HepG2 (cell line): ENCODE measurements at regions of chr21 and their contacts with region 1.

Region 1: DNA sequence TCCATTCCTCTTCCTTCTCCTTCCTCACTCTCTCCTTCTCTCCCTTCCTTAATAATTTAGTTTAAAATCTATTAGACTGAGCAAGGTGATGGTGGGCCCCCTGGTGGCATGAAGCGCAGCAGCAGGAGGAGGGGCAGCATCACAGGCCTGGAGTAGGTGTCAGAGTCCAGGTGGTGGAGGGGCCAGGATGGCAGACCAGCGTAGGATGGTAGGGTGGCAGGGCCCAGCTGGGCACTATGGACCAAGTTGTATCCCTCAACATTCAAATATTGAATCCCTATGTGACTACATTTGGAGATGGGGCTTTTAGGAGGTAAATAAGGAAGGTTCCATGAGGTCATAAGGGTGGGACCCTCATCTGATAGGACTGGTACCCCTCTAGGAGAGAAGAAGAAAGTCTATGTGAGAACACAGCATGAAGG is 61.0 kb downstream of the WDR4 start:
- DNase-seq: peak; percentile 52
- ATAC-seq: peak; percentile 88
- H3K4me3 ChIP-seq: no peak overlapping the region
- H3K27ac ChIP-seq: no peak overlapping the region
- H3K4me1 ChIP-seq: peaks cover 24% of the 10 kb centered on the region
- H3K27me3 ChIP-seq: no peaks in the 10 kb centered on the region
- CTCF ChIP-seq: peak; percentile 90
- EP300 ChIP-seq: no peak
- POLR2A ChIP-seq: no peak
- RAD21 ChIP-seq: peak; percentile 78

Region 2: DNA sequence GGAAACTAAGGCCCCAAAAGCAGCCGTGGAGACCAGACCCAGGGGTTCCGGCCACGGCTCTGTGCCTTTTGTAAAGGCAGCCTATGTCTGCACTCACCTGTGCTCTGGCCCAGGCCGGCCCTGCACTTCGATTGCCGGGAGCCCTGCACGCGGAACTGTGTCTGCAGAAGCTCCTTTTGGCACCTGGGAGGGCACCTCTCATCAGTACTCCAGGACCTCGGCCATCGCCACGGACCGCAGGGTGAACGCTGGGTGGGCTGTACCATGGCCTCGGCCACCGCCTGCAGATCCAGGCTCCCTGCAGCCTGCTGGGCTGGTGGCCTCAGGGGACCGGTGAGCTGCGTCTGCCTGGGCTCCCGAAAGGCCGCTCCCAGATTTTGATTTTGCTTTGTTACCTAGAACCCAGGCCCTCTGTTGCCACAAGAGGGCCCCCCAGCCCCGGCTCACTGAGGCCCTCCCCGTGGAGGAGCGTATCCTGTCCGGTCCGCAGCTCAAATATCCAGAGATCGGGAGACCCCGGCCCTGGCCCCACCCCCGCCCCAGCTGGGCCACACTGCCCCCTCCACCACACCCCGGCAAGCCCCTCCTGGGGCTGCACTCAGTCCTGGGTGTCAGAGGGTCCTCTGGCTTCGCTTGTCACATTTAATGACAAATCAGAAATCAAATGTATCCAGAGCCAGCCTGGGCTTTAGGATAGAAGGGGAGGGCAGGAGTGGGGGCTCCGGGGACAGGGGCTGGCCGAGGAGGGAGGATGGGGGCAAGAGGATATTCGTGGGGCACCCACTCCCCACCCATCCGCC is 225.1 kb before region 1 on chr21:
- CTCF ChIA-PET with region 1: interaction called, 18 read pairs
- POLR2A ChIA-PET with region 1: no interaction called
- in situ Hi-C with region 1: no loop called
- intact Hi-C with region 1: loop called (anchors 5 kb)
- DNase-seq: peak; percentile 48
- ATAC-seq: peak; percentile 98
- H3K4me3 ChIP-seq: peak overlapping the region; percentile 35 to 66 (median 43); a peak in 5 of 6 replicates
- H3K27ac ChIP-seq: no peak overlapping the region
- H3K4me1 ChIP-seq: peaks cover 15% of the 10 kb centered on the region
- H3K27me3 ChIP-seq: peaks cover 0 to 43% of the 10 kb centered on the region in 2 experiments; a peak in 4 of 5 replicates
- CTCF ChIP-seq: peak; percentile 87
- EP300 ChIP-seq: no peak
- POLR2A ChIP-seq: no peak
- RAD21 ChIP-seq: peak; percentile 79; the same call in 1 of the 2 replicates

Region 3: GRCh38 chr21:42796327-42797062 is 21.8 kb before region 1 on chr21:
- CTCF ChIA-PET with region 1: interaction called, 17 read pairs
- POLR2A ChIA-PET with region 1: no interaction called
- in situ Hi-C with region 1: no loop called
- intact Hi-C with region 1: loop called (anchors 1 kb)
- DNase-seq: peak; percentile 63
- ATAC-seq: peak; percentile 72
- H3K4me3 ChIP-seq: peak overlapping the region in 1 of 3 experiments; percentile 27; a peak in 2 of 6 replicates
- H3K27ac ChIP-seq: no peak overlapping the region
- H3K4me1 ChIP-seq: peaks cover 27% of the 10 kb centered on the region
- H3K27me3 ChIP-seq: no peaks in the 10 kb centered on the region
- CTCF ChIP-seq: no peak
- EP300 ChIP-seq: no peak
- POLR2A ChIP-seq: no peak
- RAD21 ChIP-seq: no peak